ENCODE measurements at regions of chr1 and their contacts with region 1.

Region 1: GRCh38 chr1:53393325-53393792 is 65.5 kb upstream of the LRP8 start:
- DNase-seq: peak; percentile 59
- ATAC-seq: peak; percentile 98
- H3K4me3 ChIP-seq: no peak overlapping the region
- H3K27ac ChIP-seq: no peak overlapping the region
- H3K4me1 ChIP-seq: peaks cover 0 to 4% of the 10 kb centered on the region in 2 experiments; a peak in 1 of 4 replicates
- H3K27me3 ChIP-seq: no peaks in the 10 kb centered on the region
- CTCF ChIP-seq: peak; percentile 86 to 93 (median 91)
- POLR2A ChIP-seq: no peak
- RAD21 ChIP-seq: peak; percentile 99

Region 2: GRCh38 chr1:53266106-53266505 is 127.3 kb before region 1 on chr1:
- CTCF ChIA-PET with region 1: interaction called, 13 read pairs
- POLR2A ChIA-PET with region 1: no interaction called
- RAD21 ChIA-PET with region 1: interaction called in 1 of 2 experiments, 3 read pairs
- intact Hi-C with region 1: loop called (anchors 1 kb)
- DNase-seq: no peak
- ATAC-seq: peak; percentile 83
- H3K4me3 ChIP-seq: no peak overlapping the region
- H3K27ac ChIP-seq: no peak overlapping the region
- H3K4me1 ChIP-seq: no peaks in the 10 kb centered on the region
- H3K27me3 ChIP-seq: no peaks in the 10 kb centered on the region
- CTCF ChIP-seq: peak; percentile 26 to 47 (median 43); a peak in 5 of 6 replicates
- POLR2A ChIP-seq: no peak
- RAD21 ChIP-seq: peak; percentile 56

Region 3: GRCh38 chr1:53278201-53278725 is 115.1 kb before region 1 on chr1:
- CTCF ChIA-PET with region 1: interaction called, 48 read pairs
- POLR2A ChIA-PET with region 1: no interaction called
- RAD21 ChIA-PET with region 1: interaction called, 3 to 4 read pairs
- intact Hi-C with region 1: loop called (anchors 1 kb)
- DNase-seq: no peak
- ATAC-seq: peak; percentile 86
- H3K4me3 ChIP-seq: no peak overlapping the region
- H3K27ac ChIP-seq: no peak overlapping the region
- H3K4me1 ChIP-seq: peaks cover 0 to 9% of the 10 kb centered on the region in 2 experiments; a peak in 1 of 4 replicates
- H3K27me3 ChIP-seq: no peaks in the 10 kb centered on the region
- CTCF ChIP-seq: peak; percentile 78 to 93 (median 90)
- POLR2A ChIP-seq: no peak
- RAD21 ChIP-seq: peak; percentile 91

Region 4: GRCh38 chr1:53293123-53293522 is 100.2 kb before region 1 on chr1:
- CTCF ChIA-PET with region 1: interaction called, 30 read pairs
- POLR2A ChIA-PET with region 1: no interaction called
- RAD21 ChIA-PET with region 1: interaction called, 3 to 4 read pairs
- intact Hi-C with region 1: no loop called
- DNase-seq: no peak
- ATAC-seq: no peak
- H3K4me3 ChIP-seq: no peak overlapping the region
- H3K27ac ChIP-seq: no peak overlapping the region; the same call in 1 of the 2 replicates
- H3K4me1 ChIP-seq: peaks cover 14 to 32% of the 10 kb centered on the region in 2 experiments
- H3K27me3 ChIP-seq: no peaks in the 10 kb centered on the region
- CTCF ChIP-seq: no peak
- POLR2A ChIP-seq: no peak
- RAD21 ChIP-seq: no peak